ENCODE measurements at regions of chr14 and their contacts with region 1.

Region 1: DNA sequence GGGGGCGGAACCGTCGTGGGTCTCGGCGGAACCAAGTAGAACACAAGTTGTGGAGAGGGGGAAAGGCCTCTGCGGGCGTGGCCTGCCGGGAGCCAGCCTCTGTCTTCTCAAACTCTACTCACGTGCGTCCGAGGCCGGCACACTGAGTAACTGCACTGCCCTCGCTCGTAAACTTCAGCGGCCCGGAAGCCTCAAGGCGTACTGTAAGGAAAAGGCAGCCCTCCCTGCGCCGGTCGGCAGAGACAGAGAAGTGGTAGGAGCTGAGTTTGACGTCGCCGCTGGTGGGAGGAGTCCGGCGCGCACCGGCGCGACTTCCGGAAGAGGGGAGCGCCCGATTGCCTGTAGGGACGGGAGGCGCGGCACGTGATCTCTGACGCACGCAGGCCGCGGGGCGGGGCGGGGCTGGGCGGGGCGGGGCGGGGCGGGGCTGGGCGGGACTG is at the start of gene FBXO33:
- DNase-seq: peak; percentile 92 to 98 (median 95)
- ATAC-seq: peak; percentile 80
- H3K4me3 ChIP-seq: peak within 1 kb of the TSS; percentile 97
- H3K4me3 Mint-ChIP-seq: peak within 1 kb of the TSS; percentile 99
- H3K27ac ChIP-seq: peak within 1 kb of the TSS; percentile 96 to 100
- H3K27ac Mint-ChIP-seq: peak within 1 kb of the TSS; percentile 100
- H3K4me1 ChIP-seq: peaks cover 34% of the 10 kb centered on the region
- H3K4me1 Mint-ChIP-seq: peaks cover 42% of the 10 kb centered on the region
- H3K27me3 ChIP-seq: no peaks in the 10 kb centered on the region
- H3K27me3 Mint-ChIP-seq: no peaks in the 10 kb centered on the region
- CTCF ChIP-seq: no peak
- total RNA-seq, gene FBXO33: 106 TPM

Region 2: DNA sequence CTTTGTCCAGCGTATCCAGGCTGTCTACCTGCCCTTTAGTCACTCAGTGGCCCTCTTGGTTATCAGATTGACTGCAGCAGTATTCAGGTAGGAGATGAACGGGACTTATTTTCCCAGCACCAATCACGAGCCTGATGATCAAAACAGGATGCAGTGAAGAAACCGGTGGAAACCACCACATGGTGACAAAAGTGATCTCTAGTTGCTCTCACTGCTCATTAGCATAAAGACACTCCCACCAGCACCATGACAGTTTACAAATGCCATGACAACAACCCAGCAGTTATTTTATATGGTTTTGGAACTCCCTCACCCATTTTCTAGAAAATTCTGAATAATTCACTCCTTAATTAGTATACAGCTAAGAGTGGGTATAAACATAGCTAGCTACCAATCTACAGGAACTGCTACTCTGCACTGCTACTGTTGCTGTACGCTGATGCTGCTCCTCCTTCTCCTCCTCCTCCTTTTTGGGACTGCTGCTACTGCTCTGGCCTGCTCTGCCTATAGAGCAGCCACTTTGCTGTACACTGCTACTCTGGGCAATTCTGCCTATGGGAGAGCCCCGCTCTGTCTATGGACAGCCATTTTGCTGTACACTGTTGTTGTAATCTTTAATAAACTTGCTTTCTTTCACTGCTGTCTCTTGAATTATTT is 1367.0 kb before region 1 on chr14:
- CTCF ChIA-PET with region 1: no interaction called
- POLR2A ChIA-PET with region 1: no interaction called
- intact Hi-C with region 1: loop called in 1 of 2 experiments (anchors 10 kb)
- DNase-seq: peak; percentile 31 to 95 (median 58)
- ATAC-seq: peak; percentile 97
- H3K4me3 ChIP-seq: peak overlapping the region; percentile 16
- H3K4me3 Mint-ChIP-seq: peak overlapping the region; percentile 65
- H3K27ac ChIP-seq: peak overlapping the region; percentile 65 to 85
- H3K27ac Mint-ChIP-seq: peak overlapping the region; percentile 93
- H3K4me1 ChIP-seq: peaks cover 36% of the 10 kb centered on the region
- H3K4me1 Mint-ChIP-seq: peaks cover 38% of the 10 kb centered on the region
- H3K27me3 ChIP-seq: peaks cover 0 to 2% of the 10 kb centered on the region in 2 experiments
- H3K27me3 Mint-ChIP-seq: no peaks in the 10 kb centered on the region
- CTCF ChIP-seq: no peak

Region 3: GRCh38 chr14:38357557-38357956 is 1074.6 kb before region 1 on chr14:
- CTCF ChIA-PET with region 1: no interaction called
- POLR2A ChIA-PET with region 1: no interaction called
- intact Hi-C with region 1: no loop called
- DNase-seq: no peak
- ATAC-seq: no peak
- H3K4me3 ChIP-seq: no peak overlapping the region
- H3K4me3 Mint-ChIP-seq: no peak overlapping the region
- H3K27ac ChIP-seq: no peak overlapping the region
- H3K27ac Mint-ChIP-seq: no peak overlapping the region
- H3K4me1 ChIP-seq: no peaks in the 10 kb centered on the region
- H3K4me1 Mint-ChIP-seq: no peaks in the 10 kb centered on the region
- H3K27me3 ChIP-seq: no peaks in the 10 kb centered on the region
- H3K27me3 Mint-ChIP-seq: no peaks in the 10 kb centered on the region
- CTCF ChIP-seq: no peak

Region 4: DNA sequence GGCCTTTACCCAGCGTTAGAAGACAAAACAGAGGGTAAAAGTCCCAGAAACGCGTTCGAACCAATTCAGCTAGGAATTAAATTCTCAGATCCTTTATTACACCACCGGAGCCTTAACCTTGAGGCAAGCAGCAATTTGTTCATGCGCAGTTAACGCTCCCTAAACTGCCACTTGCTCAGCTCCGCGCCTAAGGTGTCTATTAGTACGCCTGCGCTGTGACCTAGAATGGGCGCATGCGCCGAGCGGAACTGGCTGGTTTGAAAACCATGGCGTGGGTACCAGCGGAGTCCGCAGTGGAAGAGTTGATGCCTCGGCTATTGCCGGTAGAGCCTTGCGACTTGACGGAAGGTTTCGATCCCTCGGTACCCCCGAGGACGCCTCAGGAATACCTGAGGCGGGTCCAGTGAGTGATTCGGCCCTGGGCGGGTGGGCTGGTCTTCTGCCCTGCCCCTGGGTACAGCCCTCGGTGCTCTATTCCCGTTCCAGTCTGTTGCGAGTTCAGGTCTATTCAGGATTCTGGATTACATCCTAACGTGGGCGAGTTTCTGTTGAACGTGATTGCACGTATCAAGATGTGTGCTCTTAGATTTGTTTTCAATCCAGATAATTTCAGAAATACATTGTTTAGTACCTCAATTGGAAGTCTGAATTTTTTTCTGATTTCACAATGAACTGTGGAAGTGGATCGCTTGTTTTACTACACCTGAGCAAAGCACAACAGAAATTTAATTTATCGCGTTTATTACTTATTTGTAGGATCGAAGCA is 317.9 kb before region 1 on chr14 and contains the start of gene GEMIN2:
- CTCF ChIA-PET with region 1: no interaction called
- POLR2A ChIA-PET with region 1: interaction called, 17 read pairs
- intact Hi-C with region 1: no loop called
- DNase-seq: peak; percentile 86 to 97 (median 93)
- ATAC-seq: peak; percentile 98
- H3K4me3 ChIP-seq: peak within 1 kb of the TSS; percentile 73 to 92
- H3K4me3 Mint-ChIP-seq: peak within 1 kb of the TSS; percentile 99
- H3K27ac ChIP-seq: peak within 1 kb of the TSS; percentile 72 to 84
- H3K27ac Mint-ChIP-seq: peak within 1 kb of the TSS; percentile 98
- H3K4me1 ChIP-seq: peaks cover 8% of the 10 kb centered on the region
- H3K4me1 Mint-ChIP-seq: peaks cover 28% of the 10 kb centered on the region
- H3K27me3 ChIP-seq: no peaks in the 10 kb centered on the region
- H3K27me3 Mint-ChIP-seq: no peaks in the 10 kb centered on the region
- CTCF ChIP-seq: no peak
- total RNA-seq, gene GEMIN2: 14.0 to 14.5 TPM

Region 5: GRCh38 chr14:39174560-39175444 is 257.4 kb before region 1 on chr14 and contains the start of gene PNN:
- CTCF ChIA-PET with region 1: interaction called, 3 read pairs
- POLR2A ChIA-PET with region 1: interaction called, 38 read pairs
- intact Hi-C with region 1: loop called (anchors 1 kb)
- DNase-seq: peak; percentile 91 to 99 (median 96)
- ATAC-seq: peak; percentile 83
- H3K4me3 ChIP-seq: peak within 1 kb of the TSS; percentile 87 to 98
- H3K4me3 Mint-ChIP-seq: peak within 1 kb of the TSS; percentile 100
- H3K27ac ChIP-seq: peak within 1 kb of the TSS; percentile 92 to 94
- H3K27ac Mint-ChIP-seq: peak within 1 kb of the TSS; percentile 100
- H3K4me1 ChIP-seq: peaks cover 23% of the 10 kb centered on the region
- H3K4me1 Mint-ChIP-seq: peaks cover 48% of the 10 kb centered on the region
- H3K27me3 ChIP-seq: no peaks in the 10 kb centered on the region
- H3K27me3 Mint-ChIP-seq: no peaks in the 10 kb centered on the region
- CTCF ChIP-seq: no peak
- total RNA-seq, gene PNN: 102 to 109 TPM

Region 6: DNA sequence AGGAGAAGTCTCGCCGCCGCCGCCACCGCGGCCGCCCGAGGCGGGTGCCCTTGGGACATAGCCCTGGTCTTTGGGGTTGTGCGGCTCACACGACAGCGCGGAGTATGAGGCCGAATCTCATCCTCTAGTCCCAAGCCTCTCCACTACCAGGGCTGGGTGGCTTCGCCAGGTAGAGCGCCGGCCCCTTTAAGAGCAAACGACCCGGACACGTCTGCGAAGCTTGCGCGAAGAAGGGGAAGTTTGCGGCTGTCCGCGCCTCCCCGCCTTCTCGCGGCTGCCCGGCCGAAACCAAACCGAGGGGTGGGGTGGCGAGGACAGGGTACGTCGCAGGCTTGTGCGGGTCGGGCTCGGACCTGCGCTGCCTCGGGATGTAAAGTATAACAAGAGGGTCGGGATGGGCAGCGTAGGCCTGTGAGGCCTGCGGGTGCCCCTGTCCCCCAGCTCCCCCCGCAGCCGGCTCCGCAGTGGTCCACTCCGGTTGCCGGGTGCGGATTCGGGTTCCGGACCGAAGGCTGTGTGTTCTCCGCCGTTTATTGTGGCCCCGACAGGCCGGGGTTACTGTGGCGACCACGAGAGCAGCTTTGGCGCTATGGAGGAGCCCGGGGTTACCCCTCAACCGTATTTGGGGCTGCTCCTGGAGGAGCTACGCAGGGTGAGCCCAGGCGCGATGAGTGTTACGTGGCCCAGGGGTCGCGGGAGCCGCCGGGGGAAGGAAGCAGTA is 165.2 kb before region 1 on chr14:
- CTCF ChIA-PET with region 1: no interaction called
- POLR2A ChIA-PET with region 1: interaction called, 51 read pairs
- intact Hi-C with region 1: loop called (anchors 1 to 2 kb)
- DNase-seq: peak; percentile 58 to 89 (median 72)
- ATAC-seq: peak; percentile 75
- H3K4me3 ChIP-seq: peak overlapping the region; percentile 98
- H3K4me3 Mint-ChIP-seq: peak overlapping the region; percentile 92
- H3K27ac ChIP-seq: peak overlapping the region; percentile 96 to 98
- H3K27ac Mint-ChIP-seq: peak overlapping the region; percentile 98
- H3K4me1 ChIP-seq: peaks cover 35% of the 10 kb centered on the region
- H3K4me1 Mint-ChIP-seq: peaks cover 54% of the 10 kb centered on the region
- H3K27me3 ChIP-seq: no peaks in the 10 kb centered on the region
- H3K27me3 Mint-ChIP-seq: no peaks in the 10 kb centered on the region
- CTCF ChIP-seq: no peak

Region 7: DNA sequence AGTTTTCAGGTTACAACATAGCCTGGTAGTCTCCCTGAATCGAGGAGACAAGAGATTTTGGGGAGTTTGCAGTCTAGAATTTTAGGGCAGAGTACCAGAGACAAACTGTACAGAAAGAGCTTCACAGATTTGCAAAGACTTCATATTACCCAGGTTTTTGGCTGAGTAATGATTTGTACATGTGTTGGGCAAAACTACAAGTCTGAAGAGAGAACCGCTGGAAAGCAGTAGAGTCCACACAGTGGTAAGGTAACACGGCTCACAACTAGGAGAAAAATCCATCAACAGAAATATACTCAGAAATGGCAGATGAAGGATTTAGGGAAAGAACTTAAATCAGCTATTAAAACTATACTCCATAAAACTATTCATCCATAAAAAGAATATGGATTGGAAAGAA is 25.6 kb before region 1 on chr14:
- CTCF ChIA-PET with region 1: no interaction called
- POLR2A ChIA-PET with region 1: no interaction called
- intact Hi-C with region 1: no loop called
- DNase-seq: no peak
- ATAC-seq: no peak
- H3K4me3 ChIP-seq: no peak overlapping the region
- H3K4me3 Mint-ChIP-seq: no peak overlapping the region
- H3K27ac ChIP-seq: no peak overlapping the region
- H3K27ac Mint-ChIP-seq: peak overlapping the region; percentile 32
- H3K4me1 ChIP-seq: no peaks in the 10 kb centered on the region
- H3K4me1 Mint-ChIP-seq: peaks cover 47% of the 10 kb centered on the region
- H3K27me3 ChIP-seq: no peaks in the 10 kb centered on the region
- H3K27me3 Mint-ChIP-seq: no peaks in the 10 kb centered on the region
- CTCF ChIP-seq: no peak

Measured in CD8-positive, alpha-beta T cell (primary cell).